Activated T-helper 1 cell treated with anti-CD3 and anti-CD28 coated beads, Interleukin-12 subunit alpha, Interleukin-12 subunit beta, Interleukin-2, Interleukin-4 antibody, amounts not matched to agents 30 ng/mL and 10 ng/mL and 1 ng/mL, durations not matched to agents 14 hours and 24 hours and 36 hours (primary cell): ENCODE measurements at regions of chr14 and their contacts with region 1.

Region 1: GRCh38 chr14:65412032-65412846 is at the start of gene FUT8:
- DNase-seq: peak; percentile 87
- H3K4me3 Mint-ChIP-seq: peak within 1 kb of the TSS; percentile 98
- H3K27ac Mint-ChIP-seq: peak within 1 kb of the TSS; percentile 92
- H3K4me1 Mint-ChIP-seq: peaks cover 72% of the 10 kb centered on the region
- H3K27me3 Mint-ChIP-seq: no peaks in the 10 kb centered on the region
- total RNA-seq, gene FUT8: 181 and 182 TPM in 2 replicates

Region 2: GRCh38 chr14:65042731-65043372 is 369.4 kb before region 1 on chr14:
- intact Hi-C with region 1: no loop called
- DNase-seq: no peak
- H3K4me3 Mint-ChIP-seq: no peak overlapping the region
- H3K27ac Mint-ChIP-seq: no peak overlapping the region
- H3K4me1 Mint-ChIP-seq: peaks cover 13% of the 10 kb centered on the region
- H3K27me3 Mint-ChIP-seq: no peaks in the 10 kb centered on the region

Region 3: DNA sequence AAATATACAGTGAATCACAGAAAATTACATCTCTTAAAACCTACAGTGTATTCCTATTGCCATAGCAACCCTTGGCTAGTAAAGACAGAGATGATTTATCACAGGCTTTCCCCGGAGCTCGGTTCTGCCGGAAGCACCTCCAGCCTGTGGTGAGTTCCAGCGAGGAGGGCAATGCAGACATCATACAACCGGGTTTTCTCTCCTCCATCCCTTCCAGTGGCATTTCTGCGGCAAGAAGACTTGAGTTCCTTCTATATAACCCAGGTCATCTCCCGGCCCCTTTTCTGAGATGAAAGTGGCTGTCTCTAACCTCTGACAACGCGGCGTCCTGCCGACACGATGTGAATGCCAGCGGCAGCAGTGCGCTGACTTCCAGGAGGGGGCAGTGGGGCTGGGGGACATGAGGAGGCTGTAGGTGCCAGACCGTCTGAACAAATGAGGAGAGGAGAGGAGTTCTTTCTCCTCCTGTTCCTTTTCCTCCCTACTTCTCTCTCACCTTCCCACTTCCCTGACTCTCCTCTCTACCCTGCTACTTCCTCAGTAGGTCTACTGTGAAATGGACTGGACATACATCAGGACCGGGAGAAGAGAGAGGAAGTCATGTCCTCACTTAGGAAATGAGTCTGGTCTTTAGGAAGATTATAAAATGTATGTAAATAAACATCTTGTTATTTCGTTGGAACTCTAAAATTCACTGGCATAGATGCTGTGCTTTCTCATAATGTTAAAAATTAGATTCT is 241.3 kb before region 1 on chr14:
- intact Hi-C with region 1: loop called (anchors 1 kb)
- DNase-seq: peak; percentile 49
- H3K4me3 Mint-ChIP-seq: peak overlapping the region; percentile 73
- H3K27ac Mint-ChIP-seq: peak overlapping the region; percentile 88
- H3K4me1 Mint-ChIP-seq: peaks cover 48% of the 10 kb centered on the region
- H3K27me3 Mint-ChIP-seq: no peaks in the 10 kb centered on the region

Region 4: DNA sequence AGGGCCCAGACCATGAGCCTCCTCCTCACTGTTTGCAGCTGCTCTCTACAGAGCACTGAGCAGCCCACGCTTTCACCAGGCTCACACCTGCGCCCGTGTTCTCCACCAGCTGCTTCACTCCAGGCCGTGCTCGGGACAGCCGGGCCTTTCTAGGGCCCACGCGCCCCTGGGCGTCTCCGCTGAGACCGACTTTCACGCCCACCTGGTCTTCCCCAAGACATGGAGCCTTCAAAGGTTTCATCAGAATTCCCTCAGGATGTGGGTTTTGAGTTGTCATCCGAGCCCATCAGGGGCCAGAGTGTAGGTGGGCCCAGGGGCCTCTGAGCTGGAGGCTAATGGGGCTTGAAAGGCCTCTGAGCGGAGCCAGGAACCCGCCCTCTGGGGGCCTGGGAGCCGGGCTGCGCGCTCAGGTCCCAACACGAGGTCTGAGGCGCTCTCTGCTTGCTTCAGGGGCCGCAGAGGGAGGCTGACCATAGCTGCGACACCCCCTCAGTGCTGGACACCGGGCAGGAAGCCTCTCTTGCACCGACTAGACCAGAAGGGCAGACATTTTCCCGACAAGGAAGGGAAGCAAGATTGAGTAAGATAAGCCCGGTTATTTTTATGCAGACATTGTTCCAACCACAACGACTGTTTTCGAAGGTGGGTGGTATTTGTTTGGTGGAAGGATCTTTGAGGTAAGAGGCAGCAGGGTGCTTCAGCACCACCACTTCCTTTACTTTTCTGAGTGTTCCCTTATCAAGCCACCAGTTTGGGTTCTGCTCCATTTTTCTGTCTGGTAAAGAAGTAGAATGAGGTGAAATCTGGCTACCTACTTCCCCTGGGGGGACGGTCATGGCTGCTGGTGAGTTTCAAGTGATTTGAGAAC is 124.7 kb before region 1 on chr14:
- intact Hi-C with region 1: loop called (anchors 1 kb)
- DNase-seq: peak; percentile 63
- H3K4me3 Mint-ChIP-seq: peak overlapping the region; percentile 82
- H3K27ac Mint-ChIP-seq: peak overlapping the region; percentile 97
- H3K4me1 Mint-ChIP-seq: peaks cover 82% of the 10 kb centered on the region
- H3K27me3 Mint-ChIP-seq: no peaks in the 10 kb centered on the region

Region 5: DNA sequence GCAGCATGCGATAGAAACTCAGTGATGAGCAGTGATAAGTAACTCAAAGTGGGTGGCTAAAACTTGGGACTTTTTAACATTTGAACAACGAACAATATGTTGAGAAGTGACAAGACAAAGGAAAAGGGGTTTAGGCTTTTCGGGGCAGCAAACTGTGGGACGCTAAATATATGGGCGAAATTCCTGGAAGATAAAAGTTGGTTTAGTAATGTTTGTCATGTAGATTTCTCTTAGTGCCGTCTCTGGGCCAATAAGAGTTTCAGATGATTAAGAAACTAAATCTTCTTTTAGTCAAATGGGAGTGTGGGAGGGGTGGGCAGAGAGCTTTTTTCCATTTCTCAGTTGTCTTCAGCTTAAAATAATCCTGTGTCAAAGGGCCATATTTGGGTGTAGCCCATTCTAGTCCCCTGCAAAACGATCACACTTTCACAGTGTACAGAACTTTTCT is 41.4 kb before region 1 on chr14:
- intact Hi-C with region 1: loop called (anchors 1 kb)
- DNase-seq: no peak
- H3K4me3 Mint-ChIP-seq: peak overlapping the region; percentile 4
- H3K27ac Mint-ChIP-seq: peak overlapping the region; percentile 89
- H3K4me1 Mint-ChIP-seq: peaks cover 76% of the 10 kb centered on the region
- H3K27me3 Mint-ChIP-seq: no peaks in the 10 kb centered on the region

Region 6: GRCh38 chr14:65462411-65462810 is 50.2 kb after region 1 on chr14:
- intact Hi-C with region 1: loop called (anchors 2 kb)
- DNase-seq: no peak
- H3K4me3 Mint-ChIP-seq: peak overlapping the region; percentile 5
- H3K27ac Mint-ChIP-seq: peak overlapping the region; percentile 63
- H3K4me1 Mint-ChIP-seq: peaks cover 41% of the 10 kb centered on the region
- H3K27me3 Mint-ChIP-seq: no peaks in the 10 kb centered on the region

Region 7: DNA sequence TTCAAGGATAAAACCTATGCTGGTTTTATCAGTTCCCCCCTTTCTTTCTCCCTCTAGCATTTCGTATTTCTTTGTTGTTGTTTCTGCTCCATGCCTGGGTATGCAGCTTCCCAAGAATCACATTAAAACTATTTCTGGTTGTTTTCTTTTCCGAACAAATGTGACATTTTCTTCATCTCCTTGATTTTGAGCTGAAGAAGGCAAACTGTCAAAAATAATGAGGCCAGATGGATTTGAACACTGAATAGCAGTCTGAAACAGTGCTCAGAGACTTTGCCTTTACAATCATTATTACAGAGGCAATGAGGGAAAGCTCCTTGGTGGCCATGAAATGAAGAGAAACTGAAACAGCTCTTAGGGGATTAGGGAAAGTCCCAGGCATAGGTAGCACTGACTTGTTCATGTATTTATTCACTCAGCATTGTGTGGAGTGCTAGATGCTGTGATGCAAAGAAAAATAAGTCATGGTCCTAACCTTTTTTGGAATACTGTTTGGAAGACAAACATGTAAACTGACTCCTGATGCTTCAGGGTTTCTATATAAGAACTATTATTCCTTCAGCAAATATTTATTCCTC is 319.8 kb after region 1 on chr14:
- intact Hi-C with region 1: loop called (anchors 5 kb)
- DNase-seq: peak; percentile 20
- H3K4me3 Mint-ChIP-seq: peak overlapping the region; percentile 47
- H3K27ac Mint-ChIP-seq: peak overlapping the region; percentile 64
- H3K4me1 Mint-ChIP-seq: peaks cover 16% of the 10 kb centered on the region
- H3K27me3 Mint-ChIP-seq: no peaks in the 10 kb centered on the region

Region 8: DNA sequence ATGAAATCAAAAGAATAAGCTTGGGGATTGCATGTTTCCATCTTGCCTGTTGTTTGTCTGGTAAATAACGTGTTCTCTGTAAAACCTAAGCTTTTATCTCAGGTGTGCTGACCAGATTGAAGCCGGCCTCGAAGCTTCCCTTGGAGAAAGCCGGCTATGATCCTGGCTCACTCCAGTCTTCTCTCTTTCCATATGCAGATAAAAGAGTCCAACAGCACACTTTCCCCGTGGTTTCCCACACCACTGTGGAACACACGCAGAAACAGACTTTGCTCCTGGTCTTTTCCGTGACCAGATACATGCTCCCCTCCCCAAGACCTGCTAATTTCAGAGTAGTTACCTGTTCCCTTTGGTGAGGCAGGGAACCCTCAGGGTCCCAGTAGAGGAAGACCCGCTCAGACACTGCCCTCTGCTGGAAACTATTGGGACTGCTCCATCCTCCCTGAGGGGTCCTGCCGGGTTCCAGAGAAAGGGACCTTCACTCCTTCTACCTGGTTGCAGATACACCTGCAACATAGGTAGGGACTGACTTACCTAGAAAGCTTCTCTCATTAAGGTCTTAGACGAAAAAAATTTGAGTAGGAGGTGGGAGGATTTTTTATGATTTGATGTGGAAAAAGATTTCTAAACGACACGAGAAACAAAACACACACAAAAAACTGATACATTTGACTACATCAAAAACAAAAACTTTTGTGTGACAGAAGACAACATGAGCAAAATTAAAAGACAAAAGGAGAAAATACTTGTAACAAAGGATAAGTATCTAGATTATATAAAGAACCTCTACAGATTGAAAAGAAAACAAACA is 658.5 kb after region 1 on chr14:
- intact Hi-C with region 1: loop called (anchors 1 kb)
- DNase-seq: peak; percentile 48
- H3K4me3 Mint-ChIP-seq: no peak overlapping the region
- H3K27ac Mint-ChIP-seq: no peak overlapping the region
- H3K4me1 Mint-ChIP-seq: peaks cover 13% of the 10 kb centered on the region
- H3K27me3 Mint-ChIP-seq: peaks cover 16% of the 10 kb centered on the region